Heart left ventricle (tissue), 16 donors: ENCODE measurements at regions of chr9 and their contacts with region 1.

Region 1: GRCh38 chr9:127734747-127735529 is at the start of gene TOR2A:
- DNase-seq: peak; percentile 98 to 99 (median 98)
- ATAC-seq: peak; percentile 91 to 96 (median 96)
- H3K4me3 ChIP-seq: peak within 1 kb of the TSS; percentile 40 to 85 (median 74)
- H3K27ac ChIP-seq: peak within 1 kb of the TSS; percentile 89 to 99 (median 94)
- H3K4me1 ChIP-seq: peaks cover 0 to 24% (median 13%) of the 10 kb centered on the region in 12 donors
- H3K27me3 ChIP-seq: no peaks in the 10 kb centered on the region
- CTCF ChIP-seq: peak; percentile 90 to 97 (median 92)
- POLR2A ChIP-seq: peak in 1 of 2 donors; percentile 94
- total RNA-seq, gene TOR2A: 1.7 to 9.2 (median 3.3) TPM

Region 2: GRCh38 chr9:127503947-127504782 is 230.8 kb before region 1 on chr9:
- intact Hi-C with region 1: loop called in 6 of 10 experiments (anchors 5 to 10 kb)
- DNase-seq: peak; percentile 82 to 91 (median 88)
- ATAC-seq: peak; percentile 75 to 86 (median 79)
- H3K4me3 ChIP-seq: no peak overlapping the region
- H3K27ac ChIP-seq: peak overlapping the region in 3 of 12 donors; percentile 17 to 24 (median 19)
- H3K4me1 ChIP-seq: peaks cover 0 to 3% (median under 1%) of the 10 kb centered on the region in 12 donors
- H3K27me3 ChIP-seq: no peaks in the 10 kb centered on the region
- CTCF ChIP-seq: peak; percentile 84 to 94 (median 90)
- POLR2A ChIP-seq: peak in 1 of 2 donors; percentile 15

Region 3: DNA sequence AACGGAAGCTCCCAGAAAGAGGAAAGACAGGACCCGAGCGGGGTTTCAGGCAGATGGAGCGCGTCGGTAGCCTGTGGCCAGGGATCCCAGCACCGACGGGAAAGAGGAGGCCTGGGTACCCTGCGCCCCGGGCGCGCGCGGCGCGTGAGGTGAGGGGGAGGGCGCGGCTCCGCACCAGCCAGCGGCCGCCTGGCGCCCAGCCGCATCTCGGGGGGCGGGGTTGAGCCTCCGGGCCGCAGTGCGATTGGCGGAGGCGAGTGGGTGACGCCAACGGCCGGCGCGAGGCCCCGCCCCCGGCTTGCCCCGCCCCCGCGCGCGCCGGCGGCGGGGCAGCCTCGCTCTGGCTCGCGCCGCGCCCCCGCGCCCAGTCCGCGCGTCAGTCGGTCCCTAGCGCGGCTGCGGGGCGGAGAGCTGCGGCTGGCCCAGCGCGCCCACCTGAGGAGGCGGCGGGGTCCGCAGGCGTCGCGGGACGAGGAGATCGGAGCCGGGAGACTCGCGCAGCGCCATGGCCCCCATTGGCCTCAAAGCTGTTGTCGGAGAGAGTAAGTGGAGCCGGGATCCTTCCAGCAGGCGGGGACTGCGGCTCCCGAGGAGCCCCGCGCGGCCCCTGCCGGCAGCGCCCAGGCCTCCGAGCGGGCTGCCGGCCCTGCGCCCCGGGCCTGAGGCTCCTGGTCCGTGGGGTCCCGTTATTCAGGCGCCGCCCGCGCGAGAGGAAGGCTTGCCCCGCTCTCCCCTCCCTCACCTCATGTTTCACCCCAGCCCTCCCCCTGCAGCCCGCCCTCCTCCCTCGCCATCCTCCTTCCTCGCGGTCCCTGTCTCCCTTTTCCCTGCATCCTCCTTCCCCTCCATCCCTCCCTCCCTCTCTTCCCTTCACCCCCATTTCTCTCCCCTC is 122.8 kb before region 1 on chr9 and contains the start of gene STXBP1:
- intact Hi-C with region 1: loop called in 1 of 10 experiments (anchors 5 kb)
- DNase-seq: peak; percentile 90 to 95 (median 92)
- ATAC-seq: peak; percentile 71 to 90 (median 86)
- H3K4me3 ChIP-seq: peak within 1 kb of the TSS; percentile 68 to 99 (median 93)
- H3K27ac ChIP-seq: peak within 1 kb of the TSS; percentile 85 to 98 (median 94)
- H3K4me1 ChIP-seq: peaks cover 0 to 47% (median 35%) of the 10 kb centered on the region in 12 donors
- H3K27me3 ChIP-seq: peaks cover 0 to 5% (median 0%) of the 10 kb centered on the region in 9 donors
- CTCF ChIP-seq: peak in 6 of 12 donors; percentile 9 to 50 (median 27)
- POLR2A ChIP-seq: peak in 1 of 2 donors; percentile 91
- total RNA-seq, gene STXBP1: 35.9 to 102 (median 50.2) TPM

Region 4: DNA sequence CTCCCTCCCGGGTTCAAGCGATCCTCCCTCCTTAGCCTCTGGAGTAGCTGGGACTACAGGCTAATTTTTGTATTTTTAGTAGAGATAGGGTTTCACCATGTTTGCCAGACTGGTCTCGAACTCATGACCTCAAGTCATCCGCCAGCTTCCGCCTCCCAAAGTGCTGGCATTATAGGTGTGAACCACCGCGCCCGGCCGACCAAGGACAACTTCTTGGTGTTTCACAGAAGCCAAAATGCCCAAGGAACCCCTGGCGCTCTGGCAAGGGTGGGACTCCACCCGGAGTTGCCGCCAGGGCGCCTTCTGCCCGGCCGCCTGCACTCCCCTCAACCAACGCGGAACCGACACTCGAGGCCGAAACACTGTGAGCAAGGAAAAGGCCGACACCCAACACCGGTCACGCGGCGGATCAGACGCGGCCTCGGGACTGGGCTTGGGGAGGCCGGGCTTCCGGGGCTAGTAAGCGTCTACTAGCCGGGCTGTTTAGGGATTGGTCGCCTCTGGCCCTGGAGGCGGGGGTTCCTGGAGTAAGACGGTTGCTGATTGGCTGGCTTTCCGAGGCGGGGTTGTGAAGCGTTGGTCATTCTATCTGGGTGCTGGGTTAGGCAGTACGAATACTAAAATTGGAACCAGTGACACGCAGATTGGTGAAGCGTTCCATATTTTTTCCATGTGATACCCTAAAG is 35.8 kb before region 1 on chr9:
- intact Hi-C with region 1: no loop called
- DNase-seq: peak; percentile 97 to 99 (median 98)
- ATAC-seq: peak; percentile 99
- H3K4me3 ChIP-seq: peak overlapping the region in 9 of 12 donors; percentile 23 to 49 (median 38)
- H3K27ac ChIP-seq: peak overlapping the region; percentile 26 to 92 (median 87)
- H3K4me1 ChIP-seq: peaks cover 0 to 14% (median 8%) of the 10 kb centered on the region in 12 donors
- H3K27me3 ChIP-seq: no peaks in the 10 kb centered on the region
- CTCF ChIP-seq: peak in 4 of 12 donors; percentile 16 to 29 (median 24)
- POLR2A ChIP-seq: peak in 1 of 2 donors; percentile 67

Region 5: GRCh38 chr9:127785023-127785932 is 50.3 kb after region 1 on chr9:
- intact Hi-C with region 1: loop called (anchors 1 to 5 kb)
- DNase-seq: peak; percentile 89 to 95 (median 90)
- ATAC-seq: peak; percentile 25 to 71 (median 64)
- H3K4me3 ChIP-seq: peak overlapping the region; percentile 76 to 100 (median 98)
- H3K27ac ChIP-seq: peak overlapping the region; percentile 88 to 100 (median 96)
- H3K4me1 ChIP-seq: peaks cover 0 to 78% (median 45%) of the 10 kb centered on the region in 12 donors
- H3K27me3 ChIP-seq: no peaks in the 10 kb centered on the region
- CTCF ChIP-seq: peak; percentile 77 to 97 (median 91)
- POLR2A ChIP-seq: no peak

Region 6: GRCh38 chr9:127877566-127877998 is 142.6 kb after region 1 on chr9 and contains the start of gene AK1:
- intact Hi-C with region 1: loop called in 6 of 10 experiments (anchors 2 to 5 kb)
- DNase-seq: peak; percentile 88 to 93 (median 89)
- ATAC-seq: peak; percentile 14 to 81 (median 76)
- H3K4me3 ChIP-seq: peak within 1 kb of the TSS; percentile 55 to 94 (median 66)
- H3K27ac ChIP-seq: peak within 1 kb of the TSS; percentile 64 to 98 (median 92)
- H3K4me1 ChIP-seq: peaks cover 3 to 63% (median 43%) of the 10 kb centered on the region in 12 donors
- H3K27me3 ChIP-seq: no peaks in the 10 kb centered on the region
- CTCF ChIP-seq: peak in 1 of 12 donors; percentile 10
- POLR2A ChIP-seq: peak in 1 of 2 donors; percentile 83
- total RNA-seq, gene AK1: 415 to 810 (median 586) TPM